Naive thymus-derived CD4-positive, alpha-beta T cell (primary cell): ENCODE measurements at regions of chr17 and their contacts with region 1.

Region 1: DNA sequence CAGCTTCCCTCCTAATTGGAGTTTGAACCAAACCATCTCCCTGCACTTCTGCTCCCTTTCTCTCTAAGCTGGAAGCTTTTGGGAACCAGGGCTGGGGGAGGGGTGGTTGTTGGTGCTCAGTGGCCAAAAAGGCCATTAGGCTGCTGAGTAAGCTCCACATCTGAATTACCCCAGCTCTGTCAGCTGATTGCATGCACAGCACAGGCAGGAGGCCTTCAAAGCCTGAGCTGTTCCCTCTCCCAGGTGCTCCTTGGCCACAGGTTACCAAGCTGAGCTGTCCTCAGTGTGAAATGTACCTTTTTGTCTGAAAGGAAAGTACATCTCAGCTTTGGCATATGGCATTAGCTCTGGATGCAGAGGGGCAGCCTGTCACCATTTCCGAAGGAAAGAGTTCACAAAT is 6.2 kb upstream of the TBKBP1 start:
- DNase-seq: peak in 1 of 9 donors; percentile 17
- ATAC-seq: no peak
- H3K4me3 ChIP-seq: no peak overlapping the region
- H3K4me3 Mint-ChIP-seq: no peak overlapping the region
- H3K27ac ChIP-seq: no peak overlapping the region
- H3K27ac Mint-ChIP-seq: peak overlapping the region in 1 of 9 donors; percentile 36
- H3K4me1 ChIP-seq: peaks cover 5 to 11% of the 10 kb centered on the region in 2 donors
- H3K4me1 Mint-ChIP-seq: peaks cover 1 to 20% (median 5%) of the 10 kb centered on the region in 7 donors
- H3K27me3 ChIP-seq: no peaks in the 10 kb centered on the region
- H3K27me3 Mint-ChIP-seq: peaks cover 0 to 3% (median 0%) of the 10 kb centered on the region in 5 donors

Region 2: GRCh38 chr17:47633996-47634395 is 53.8 kb before region 1 on chr17:
- CTCF ChIA-PET with region 1: no interaction called
- POLR2A ChIA-PET with region 1: no interaction called
- intact Hi-C with region 1: no loop called
- DNase-seq: no peak
- ATAC-seq: no peak
- H3K4me3 ChIP-seq: no peak overlapping the region
- H3K4me3 Mint-ChIP-seq: no peak overlapping the region
- H3K27ac ChIP-seq: no peak overlapping the region
- H3K27ac Mint-ChIP-seq: no peak overlapping the region
- H3K4me1 ChIP-seq: no peaks in the 10 kb centered on the region
- H3K4me1 Mint-ChIP-seq: peaks cover 6 to 16% (median 8%) of the 10 kb centered on the region in 7 donors
- H3K27me3 ChIP-seq: no peaks in the 10 kb centered on the region
- H3K27me3 Mint-ChIP-seq: no peaks in the 10 kb centered on the region

Region 3: GRCh38 chr17:47675380-47676198 is 12.2 kb before region 1 on chr17:
- CTCF ChIA-PET with region 1: interaction called, 12 read pairs
- POLR2A ChIA-PET with region 1: interaction called, 4 read pairs
- intact Hi-C with region 1: loop called in 1 of 2 experiments (anchors 2 kb)
- DNase-seq: peak in 1 of 9 donors; percentile 9
- ATAC-seq: no peak
- H3K4me3 ChIP-seq: no peak overlapping the region
- H3K4me3 Mint-ChIP-seq: no peak overlapping the region
- H3K27ac ChIP-seq: no peak overlapping the region
- H3K27ac Mint-ChIP-seq: peak overlapping the region in 3 of 9 donors; percentile 20 to 54 (median 38)
- H3K4me1 ChIP-seq: no peaks in the 10 kb centered on the region
- H3K4me1 Mint-ChIP-seq: peaks cover 0 to 40% (median 9%) of the 10 kb centered on the region in 7 donors
- H3K27me3 ChIP-seq: no peaks in the 10 kb centered on the region
- H3K27me3 Mint-ChIP-seq: no peaks in the 10 kb centered on the region

Region 4: GRCh38 chr17:47840740-47841603 is 153.2 kb after region 1 on chr17 and contains the start of gene SCRN2:
- CTCF ChIA-PET with region 1: no interaction called
- POLR2A ChIA-PET with region 1: no interaction called
- intact Hi-C with region 1: no loop called
- DNase-seq: peak; percentile 71 to 94 (median 81)
- ATAC-seq: peak; percentile 94
- H3K4me3 ChIP-seq: peak within 1 kb of the TSS; percentile 95
- H3K4me3 Mint-ChIP-seq: peak within 1 kb of the TSS; percentile 84 to 99 (median 94)
- H3K27ac ChIP-seq: peak within 1 kb of the TSS; percentile 75
- H3K27ac Mint-ChIP-seq: peak within 1 kb of the TSS; percentile 55 to 93 (median 86)
- H3K4me1 ChIP-seq: peaks cover 19 to 21% of the 10 kb centered on the region in 2 donors
- H3K4me1 Mint-ChIP-seq: peaks cover 9 to 49% (median 38%) of the 10 kb centered on the region in 7 donors
- H3K27me3 ChIP-seq: peaks cover 0 to 7% of the 10 kb centered on the region in 2 donors
- H3K27me3 Mint-ChIP-seq: peaks cover 6 to 23% (median 18%) of the 10 kb centered on the region in 5 donors
- total RNA-seq, gene SCRN2: 33.4 to 55.9 (median 41.4) TPM